ENCODE measurements at regions of chr5 and their contacts with region 1.

Region 1: DNA sequence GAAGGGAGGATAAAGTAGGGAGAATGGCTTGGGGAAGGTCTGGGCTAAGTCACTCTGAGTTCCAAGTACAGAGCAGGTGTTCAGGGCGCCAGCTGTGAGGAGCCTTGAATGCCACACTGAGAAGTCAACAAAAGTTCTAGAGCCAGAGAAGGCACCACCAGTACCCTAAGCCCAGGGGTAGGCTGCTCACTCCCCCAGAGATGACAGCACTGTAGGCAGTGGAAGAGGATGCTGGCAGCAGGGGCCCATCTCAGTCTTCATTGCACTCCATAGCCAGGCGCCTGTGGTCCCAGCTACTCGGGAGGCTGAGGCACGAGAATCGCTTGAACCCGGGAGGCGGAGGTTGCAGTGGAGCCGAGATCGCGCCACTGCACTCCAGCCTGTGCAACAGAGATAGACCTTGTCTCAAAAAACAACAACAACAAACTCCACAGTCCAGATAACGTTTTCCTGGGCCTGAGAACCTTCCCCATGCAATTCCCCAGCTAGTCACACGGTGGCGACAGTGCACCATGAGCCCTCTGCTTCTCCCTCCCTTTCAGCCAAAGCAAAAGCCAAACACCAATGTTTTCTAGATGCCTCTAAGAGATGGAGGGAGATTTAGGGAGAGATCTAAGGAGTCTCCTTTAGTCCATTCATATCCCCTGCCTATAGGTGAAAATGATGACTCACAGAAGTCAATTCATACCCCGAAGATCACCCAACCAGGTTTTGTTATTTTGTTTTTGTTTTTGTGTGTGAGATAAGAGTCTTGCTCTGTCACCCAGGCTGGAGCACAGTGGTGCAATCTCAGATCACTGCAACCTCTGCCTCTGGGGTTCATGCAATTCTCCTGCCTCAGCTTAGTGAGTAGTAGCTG is 19.8 kb upstream of the NSD1 start:
- DNase-seq: peak; percentile 55
- ATAC-seq: peak; percentile 76
- H3K4me3 ChIP-seq: no peak overlapping the region
- H3K27ac ChIP-seq: no peak overlapping the region
- H3K4me1 ChIP-seq: no peaks in the 10 kb centered on the region; a peak in 1 of 4 replicates
- H3K27me3 ChIP-seq: no peaks in the 10 kb centered on the region
- CTCF ChIP-seq: peak; percentile 93 to 99 (median 98)
- POLR2A ChIP-seq: no peak
- RAD21 ChIP-seq: peak; percentile 99

Region 2: GRCh38 chr5:176660860-176661641 is 452.7 kb before region 1 on chr5:
- CTCF ChIA-PET with region 1: interaction called, 79 read pairs
- POLR2A ChIA-PET with region 1: interaction called, 5 read pairs
- RAD21 ChIA-PET with region 1: interaction called, 15 to 21 read pairs
- intact Hi-C with region 1: loop called (anchors 1 kb)
- DNase-seq: peak; percentile 49
- ATAC-seq: peak; percentile 93
- H3K4me3 ChIP-seq: no peak overlapping the region
- H3K27ac ChIP-seq: no peak overlapping the region
- H3K4me1 ChIP-seq: no peaks in the 10 kb centered on the region; a peak in 1 of 4 replicates
- H3K27me3 ChIP-seq: no peaks in the 10 kb centered on the region
- CTCF ChIP-seq: peak; percentile 93 to 97 (median 93)
- POLR2A ChIP-seq: no peak
- RAD21 ChIP-seq: peak; percentile 98

Region 3: GRCh38 chr5:177071666-177072385 is 42.0 kb before region 1 on chr5:
- CTCF ChIA-PET with region 1: interaction called, 49 read pairs
- POLR2A ChIA-PET with region 1: no interaction called
- RAD21 ChIA-PET with region 1: interaction called, 3 to 4 read pairs
- intact Hi-C with region 1: loop called (anchors 1 kb)
- DNase-seq: peak; percentile 69
- ATAC-seq: peak; percentile 93
- H3K4me3 ChIP-seq: no peak overlapping the region
- H3K27ac ChIP-seq: no peak overlapping the region
- H3K4me1 ChIP-seq: peaks cover 0 to 3% of the 10 kb centered on the region in 2 experiments; a peak in 1 of 4 replicates
- H3K27me3 ChIP-seq: no peaks in the 10 kb centered on the region
- CTCF ChIP-seq: peak; percentile 79 to 93 (median 87)
- POLR2A ChIP-seq: no peak
- RAD21 ChIP-seq: peak; percentile 78

Region 4: GRCh38 chr5:177303121-177303924 is 189.5 kb after region 1 on chr5 and contains the starts of genes PRELID1 and RAB24:
- CTCF ChIA-PET with region 1: interaction called, 4 read pairs
- POLR2A ChIA-PET with region 1: no interaction called
- RAD21 ChIA-PET with region 1: no interaction called
- intact Hi-C with region 1: loop called (anchors 2 kb)
- DNase-seq: no peak
- ATAC-seq: peak; percentile 58
- H3K4me3 ChIP-seq: peak within 1 kb of the TSS; percentile 88 to 99
- H3K27ac ChIP-seq: peak within 1 kb of the TSS; percentile 72
- H3K4me1 ChIP-seq: peaks cover 19 to 63% of the 10 kb centered on the region in 2 experiments
- H3K27me3 ChIP-seq: no peaks in the 10 kb centered on the region
- CTCF ChIP-seq: peak in 2 of 3 experiments; percentile 33 to 36; a peak in 3 of 6 replicates
- POLR2A ChIP-seq: peak; percentile 69
- RAD21 ChIP-seq: no peak
- total RNA-seq, gene PRELID1: 223 TPM
- total RNA-seq, gene RAB24: 13.5 TPM

Region 5: DNA sequence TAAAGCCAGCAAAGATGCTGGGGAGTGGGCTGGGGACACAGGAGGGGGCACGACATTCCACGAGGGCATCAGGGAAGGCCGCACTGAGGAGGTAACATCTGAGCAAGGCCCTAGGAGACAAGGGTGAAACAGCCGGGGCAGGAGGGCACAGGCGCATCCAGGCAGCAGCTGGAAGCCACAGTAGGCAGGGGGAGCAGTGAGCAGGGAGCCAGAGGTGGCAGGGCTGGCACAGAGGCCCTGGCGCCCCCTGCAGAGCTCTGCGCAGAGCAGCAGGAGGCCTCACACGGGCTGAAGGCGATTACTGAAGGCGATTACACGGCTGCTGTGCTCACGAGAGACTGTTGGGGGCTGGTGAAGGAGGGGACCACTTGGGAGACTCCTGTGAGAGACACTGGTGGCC is 222.3 kb after region 1 on chr5:
- CTCF ChIA-PET with region 1: interaction called, 3 read pairs
- POLR2A ChIA-PET with region 1: no interaction called
- RAD21 ChIA-PET with region 1: interaction called in 1 of 2 experiments, 6 read pairs
- intact Hi-C with region 1: loop called (anchors 1 kb)
- DNase-seq: peak; percentile 24
- ATAC-seq: peak; percentile 98
- H3K4me3 ChIP-seq: no peak overlapping the region
- H3K27ac ChIP-seq: no peak overlapping the region
- H3K4me1 ChIP-seq: no peaks in the 10 kb centered on the region
- H3K27me3 ChIP-seq: no peaks in the 10 kb centered on the region
- CTCF ChIP-seq: peak; percentile 59 to 96 (median 76)
- POLR2A ChIP-seq: no peak
- RAD21 ChIP-seq: peak; percentile 58

Region 6: DNA sequence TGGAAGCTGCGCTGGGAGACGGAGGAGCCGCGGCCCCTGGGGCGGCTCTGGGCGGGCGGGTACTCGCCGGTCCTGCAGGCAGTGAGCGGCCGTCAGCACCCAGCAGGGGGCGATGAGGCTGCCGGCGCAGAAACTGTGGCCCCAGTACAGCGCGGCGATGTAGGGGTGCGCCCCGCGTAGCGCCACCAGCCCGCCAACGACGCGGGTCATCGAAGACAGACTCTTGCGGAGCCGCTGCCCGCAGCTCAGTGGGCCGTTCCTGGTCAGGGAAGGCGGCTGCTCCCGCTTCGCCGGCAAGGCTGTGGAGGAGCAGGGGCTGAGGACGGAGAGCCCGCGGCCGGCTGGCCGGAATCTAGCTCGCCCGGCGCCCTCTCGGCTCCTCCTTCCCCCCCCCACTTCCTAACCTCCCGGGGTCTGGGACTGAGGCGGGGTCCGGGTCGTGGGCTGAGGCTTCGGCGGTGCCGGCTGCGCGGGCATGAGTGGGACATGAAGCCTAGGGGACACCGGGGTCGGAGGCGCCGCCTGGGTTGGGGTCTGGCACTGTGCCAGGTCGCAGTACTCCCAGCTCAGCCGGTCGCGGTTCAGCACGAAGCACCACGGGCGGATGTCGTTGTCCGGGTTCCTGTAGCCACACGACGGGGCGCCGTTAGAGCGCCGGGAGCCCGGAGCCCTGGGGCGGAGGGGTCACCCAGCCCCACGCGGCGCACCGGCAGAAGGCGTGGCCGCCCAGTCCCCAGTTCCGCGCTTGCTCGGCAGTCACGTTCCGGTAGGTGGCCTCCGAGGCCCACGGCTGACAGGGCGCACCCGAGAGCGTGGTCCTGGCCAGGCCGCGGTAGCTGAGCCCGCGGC is 290.2 kb after region 1 on chr5:
- CTCF ChIA-PET with region 1: interaction called, 4 read pairs
- POLR2A ChIA-PET with region 1: no interaction called
- RAD21 ChIA-PET with region 1: no interaction called
- intact Hi-C with region 1: loop called (anchors 5 kb)
- DNase-seq: peak; percentile 56
- ATAC-seq: peak; percentile 72
- H3K4me3 ChIP-seq: peak overlapping the region; percentile 69 to 82
- H3K27ac ChIP-seq: peak overlapping the region; percentile 99
- H3K4me1 ChIP-seq: peaks cover 15 to 37% of the 10 kb centered on the region in 2 experiments
- H3K27me3 ChIP-seq: no peaks in the 10 kb centered on the region
- CTCF ChIP-seq: peak in 2 of 3 experiments; percentile 55 to 69; a peak in 4 of 6 replicates
- POLR2A ChIP-seq: no peak
- RAD21 ChIP-seq: no peak

Region 7: DNA sequence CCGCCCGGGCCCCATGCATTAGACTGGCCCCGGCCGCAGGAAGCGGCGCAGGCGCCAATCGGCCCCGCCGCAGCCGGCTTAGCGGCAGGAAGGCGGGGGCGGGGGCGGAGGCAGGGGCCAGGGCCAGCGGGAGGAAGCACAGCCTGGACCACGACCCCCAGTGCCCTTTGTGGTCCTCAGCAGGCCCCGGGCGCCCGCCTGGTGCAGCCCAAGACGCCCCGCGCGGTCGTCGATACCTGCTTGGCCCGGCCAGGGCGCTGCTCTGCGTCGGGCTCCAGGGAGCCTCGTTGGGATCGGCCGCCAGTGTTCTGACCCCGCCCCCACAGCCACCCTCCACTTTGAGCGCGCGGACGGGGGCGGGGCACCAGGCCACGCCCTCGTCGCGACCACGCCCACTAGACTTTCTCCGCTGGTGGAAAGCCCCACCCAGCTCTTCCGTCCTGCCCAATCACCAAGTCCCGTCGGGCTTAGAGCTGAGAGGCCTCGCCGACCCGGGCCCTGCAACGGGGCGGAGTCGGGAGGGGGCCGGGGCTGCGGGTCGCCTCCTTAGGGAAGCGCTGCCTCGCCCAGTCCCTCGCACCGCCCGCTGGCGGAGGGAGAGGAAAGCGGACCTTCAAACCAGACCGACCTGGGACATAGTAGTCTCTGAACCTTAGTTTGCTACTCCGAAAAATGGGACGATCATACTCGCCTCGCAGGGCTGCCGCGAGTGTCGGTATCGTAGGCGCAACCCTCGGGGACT is 383.7 kb after region 1 on chr5 and contains the start of gene PDLIM7:
- CTCF ChIA-PET with region 1: interaction called, 7 read pairs
- POLR2A ChIA-PET with region 1: no interaction called
- RAD21 ChIA-PET with region 1: no interaction called
- intact Hi-C with region 1: loop called (anchors 2 kb)
- DNase-seq: peak; percentile 92
- ATAC-seq: peak; percentile 72
- H3K4me3 ChIP-seq: peak within 1 kb of the TSS; percentile 88 to 89
- H3K27ac ChIP-seq: peak within 1 kb of the TSS; percentile 96
- H3K4me1 ChIP-seq: peaks cover 39 to 63% of the 10 kb centered on the region in 2 experiments
- H3K27me3 ChIP-seq: no peaks in the 10 kb centered on the region
- CTCF ChIP-seq: no peak
- POLR2A ChIP-seq: peak; percentile 92
- RAD21 ChIP-seq: no peak
- total RNA-seq, gene PDLIM7: 153 TPM

Region 8: GRCh38 chr5:178113199-178113787 is 999.5 kb after region 1 on chr5 and contains the start of gene N4BP3:
- CTCF ChIA-PET with region 1: no interaction called
- POLR2A ChIA-PET with region 1: no interaction called
- RAD21 ChIA-PET with region 1: no interaction called
- intact Hi-C with region 1: no loop called
- DNase-seq: peak; percentile 47
- ATAC-seq: peak; percentile 84
- H3K4me3 ChIP-seq: peak within 1 kb of the TSS; percentile 63 to 76
- H3K27ac ChIP-seq: peak within 1 kb of the TSS; percentile 60
- H3K4me1 ChIP-seq: peaks cover 18 to 35% of the 10 kb centered on the region in 2 experiments
- H3K27me3 ChIP-seq: no peaks in the 10 kb centered on the region
- CTCF ChIP-seq: no peak
- POLR2A ChIP-seq: no peak
- RAD21 ChIP-seq: no peak
- total RNA-seq, gene N4BP3: 5.2 TPM